MCF 10A (cell line): ENCODE measurements at regions of chr2 and their contacts with region 1.

Region 1: DNA sequence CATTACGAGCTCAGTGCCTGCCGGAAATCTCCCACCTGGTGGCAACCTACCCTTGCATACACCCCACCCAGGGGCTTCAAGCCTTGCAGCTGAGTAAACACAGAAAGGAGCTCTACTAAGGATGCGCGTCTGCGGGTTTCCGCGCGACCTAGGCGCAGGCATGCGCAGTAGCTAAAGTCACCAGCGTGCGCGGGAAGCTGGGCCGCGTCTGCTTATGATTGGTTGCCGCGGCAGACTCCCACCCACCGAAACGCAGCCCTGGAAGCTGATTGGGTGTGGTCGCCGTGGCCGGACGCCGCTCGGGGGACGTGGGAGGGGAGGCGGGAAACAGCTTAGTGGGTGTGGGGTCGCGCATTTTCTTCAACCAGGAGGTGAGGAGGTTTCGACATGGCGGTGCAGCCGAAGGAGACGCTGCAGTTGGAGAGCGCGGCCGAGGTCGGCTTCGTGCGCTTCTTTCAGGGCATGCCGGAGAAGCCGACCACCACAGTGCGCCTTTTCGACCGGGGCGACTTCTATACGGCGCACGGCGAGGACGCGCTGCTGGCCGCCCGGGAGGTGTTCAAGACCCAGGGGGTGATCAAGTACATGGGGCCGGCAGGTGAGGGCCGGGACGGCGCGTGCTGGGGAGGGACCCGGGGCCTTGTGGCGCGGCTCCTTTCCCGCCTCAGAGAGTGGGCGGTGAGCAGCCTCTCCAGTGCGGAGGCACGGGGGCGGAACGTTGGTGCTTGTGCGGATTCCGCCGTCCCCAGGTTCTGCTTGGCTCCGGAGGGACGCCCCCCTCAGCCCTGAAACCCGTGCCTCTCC is at the start of gene MSH2:
- DNase-seq: peak; percentile 88
- H3K4me3 Mint-ChIP-seq: peak within 1 kb of the TSS; percentile 99
- H3K27ac Mint-ChIP-seq: peak within 1 kb of the TSS; percentile 80
- H3K4me1 Mint-ChIP-seq: peaks cover 13% of the 10 kb centered on the region
- H3K27me3 Mint-ChIP-seq: no peaks in the 10 kb centered on the region
- CTCF ChIP-seq: no peak
- total RNA-seq, gene MSH2: 7.6 and 8.7 TPM in 2 replicates

Region 2: DNA sequence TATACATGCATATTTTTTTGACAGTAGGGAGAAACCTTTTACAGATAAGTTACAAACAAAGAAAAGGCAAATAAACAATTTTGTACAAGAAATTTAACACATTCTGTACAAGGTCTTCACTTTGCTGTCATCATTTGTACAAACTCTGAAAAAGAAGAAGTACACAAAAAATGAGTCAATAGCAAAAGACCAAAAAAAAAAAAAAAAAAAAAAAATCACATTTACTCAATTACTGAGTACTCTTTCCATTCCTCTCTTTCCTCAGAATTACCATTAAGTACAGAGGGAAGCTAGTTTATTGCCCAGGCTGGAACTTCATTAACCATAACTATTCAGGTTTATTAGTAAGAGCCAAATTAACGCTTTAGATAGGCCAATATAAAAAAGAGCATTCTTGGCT is 242.3 kb before region 1 on chr2:
- CTCF ChIA-PET with region 1: no interaction called
- POLR2A ChIA-PET with region 1: no interaction called
- intact Hi-C with region 1: no loop called
- DNase-seq: no peak
- H3K4me3 Mint-ChIP-seq: no peak overlapping the region
- H3K27ac Mint-ChIP-seq: no peak overlapping the region
- H3K4me1 Mint-ChIP-seq: peaks cover 16% of the 10 kb centered on the region
- H3K27me3 Mint-ChIP-seq: no peaks in the 10 kb centered on the region
- CTCF ChIP-seq: no peak

Region 3: GRCh38 chr2:47334356-47335136 is 68.5 kb before region 1 on chr2:
- CTCF ChIA-PET with region 1: interaction called, 13 read pairs
- POLR2A ChIA-PET with region 1: interaction called, 4 read pairs
- intact Hi-C with region 1: no loop called
- DNase-seq: no peak
- H3K4me3 Mint-ChIP-seq: no peak overlapping the region
- H3K27ac Mint-ChIP-seq: no peak overlapping the region
- H3K4me1 Mint-ChIP-seq: no peaks in the 10 kb centered on the region
- H3K27me3 Mint-ChIP-seq: no peaks in the 10 kb centered on the region
- CTCF ChIP-seq: no peak

Region 4: DNA sequence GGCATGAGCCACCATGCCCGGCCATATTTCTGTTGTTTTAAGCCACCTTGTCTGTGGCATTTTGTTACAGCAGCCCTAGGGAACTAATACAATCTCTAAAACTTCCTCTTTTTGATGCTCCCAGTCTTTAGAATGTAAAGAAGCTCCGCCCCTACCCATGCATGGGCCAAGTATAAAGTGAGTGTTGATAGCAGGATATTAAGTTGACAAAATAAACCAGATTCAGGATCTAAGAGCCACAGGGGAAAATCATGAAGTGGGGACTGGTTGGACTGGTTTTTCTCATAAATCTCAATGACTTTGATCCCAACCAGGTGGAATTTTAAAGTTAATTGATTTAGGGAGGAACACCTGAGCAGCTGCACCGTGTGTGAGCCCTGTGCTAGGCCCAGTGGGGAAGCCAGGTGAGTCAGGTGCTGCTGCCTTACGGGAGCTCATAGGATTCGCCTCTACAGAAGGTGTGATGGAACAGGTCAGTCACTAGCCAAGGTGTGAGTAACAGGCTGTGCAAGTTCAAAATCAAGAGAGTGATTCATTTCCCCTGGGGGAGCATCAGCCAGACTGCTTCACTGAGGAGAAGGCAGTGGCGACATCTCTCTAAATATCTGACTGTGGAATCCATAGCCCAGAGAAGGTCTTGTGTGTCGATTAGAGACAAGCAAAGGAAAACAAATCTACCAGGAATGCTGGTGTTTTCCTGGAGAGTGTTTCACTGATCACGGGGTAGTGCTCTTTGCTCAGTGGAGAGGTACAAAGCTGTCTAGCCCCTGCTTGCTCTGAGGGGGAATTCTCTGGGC is 63.1 kb before region 1 on chr2:
- CTCF ChIA-PET with region 1: interaction called, 13 read pairs
- POLR2A ChIA-PET with region 1: interaction called, 4 read pairs
- intact Hi-C with region 1: no loop called
- DNase-seq: peak; percentile 93
- H3K4me3 Mint-ChIP-seq: no peak overlapping the region
- H3K27ac Mint-ChIP-seq: no peak overlapping the region
- H3K4me1 Mint-ChIP-seq: peaks cover 12% of the 10 kb centered on the region
- H3K27me3 Mint-ChIP-seq: no peaks in the 10 kb centered on the region
- CTCF ChIP-seq: no peak